ENCODE measurements at regions of chr4 and their contacts with region 1.

Region 1: DNA sequence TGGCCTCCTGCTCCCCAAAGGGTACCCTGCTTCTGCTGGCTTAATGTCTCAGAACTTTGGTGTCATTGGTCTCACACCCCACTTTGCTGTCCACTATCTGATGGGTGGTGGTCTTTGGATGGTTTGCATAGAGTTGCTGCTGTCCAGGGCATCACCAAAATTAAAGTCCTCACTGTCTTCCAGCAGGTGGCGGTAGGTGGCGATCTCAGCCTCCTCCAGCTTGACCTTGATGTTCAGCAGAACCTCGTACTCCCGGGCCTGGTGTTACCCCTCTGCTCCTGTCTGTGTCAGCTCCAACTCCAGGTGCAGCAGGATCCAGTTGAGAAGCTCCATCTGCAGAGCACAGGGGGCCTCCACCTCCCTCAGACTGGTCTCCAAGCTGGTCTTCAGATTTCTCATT is 1169.5 kb upstream of the PABPC4L start:
- DNase-seq: no peak
- ATAC-seq: peak; percentile 81
- H3K4me3 ChIP-seq: no peak overlapping the region
- H3K27ac ChIP-seq: no peak overlapping the region
- H3K4me1 ChIP-seq: no peaks in the 10 kb centered on the region
- H3K27me3 ChIP-seq: no peaks in the 10 kb centered on the region
- CTCF ChIP-seq: peak; percentile 22 to 42 (median 38); a peak in 4 of 6 replicates
- EP300 ChIP-seq: no peak
- POLR2A ChIP-seq: no peak
- RAD21 ChIP-seq: peak; percentile 24; the same call in 1 of the 2 replicates

Region 2: GRCh38 chr4:135418353-135418752 is 47.2 kb after region 1 on chr4:
- CTCF ChIA-PET with region 1: interaction called, 7 read pairs
- POLR2A ChIA-PET with region 1: no interaction called
- RAD21 ChIA-PET with region 1: interaction called, 4 read pairs
- SMC1A ChIA-PET with region 1: no interaction called
- in situ Hi-C with region 1: no loop called
- intact Hi-C with region 1: loop called (anchors 2 kb)
- DNase-seq: no peak
- ATAC-seq: peak; percentile 86
- H3K4me3 ChIP-seq: no peak overlapping the region
- H3K27ac ChIP-seq: no peak overlapping the region
- H3K4me1 ChIP-seq: no peaks in the 10 kb centered on the region
- H3K27me3 ChIP-seq: no peaks in the 10 kb centered on the region
- CTCF ChIP-seq: peak; percentile 27 to 49 (median 47); a peak in 4 of 6 replicates
- EP300 ChIP-seq: no peak
- POLR2A ChIP-seq: no peak
- RAD21 ChIP-seq: peak; percentile 27; the same call in 1 of the 2 replicates